IMR-90 (cell line): ENCODE measurements at regions of chr1 and their contacts with region 1.

Region 1: GRCh38 chr1:94926915-94927404 is at the start of gene CNN3:
- DNase-seq: peak; percentile 92
- ATAC-seq: peak; percentile 91
- H3K4me3 ChIP-seq: peak within 1 kb of the TSS; percentile 63
- H3K27ac ChIP-seq: peak within 1 kb of the TSS; percentile 93
- H3K4me1 ChIP-seq: peaks cover 23% of the 10 kb centered on the region
- H3K27me3 ChIP-seq: no peaks in the 10 kb centered on the region
- CTCF ChIP-seq: peak; percentile 9; the same call in 1 of the 2 replicates
- POLR2A ChIP-seq: peak; percentile 97
- RAD21 ChIP-seq: peak; percentile 17; the same call in 1 of the 2 replicates
- total RNA-seq, gene CNN3: 552 and 592 TPM in 2 replicates

Region 2: DNA sequence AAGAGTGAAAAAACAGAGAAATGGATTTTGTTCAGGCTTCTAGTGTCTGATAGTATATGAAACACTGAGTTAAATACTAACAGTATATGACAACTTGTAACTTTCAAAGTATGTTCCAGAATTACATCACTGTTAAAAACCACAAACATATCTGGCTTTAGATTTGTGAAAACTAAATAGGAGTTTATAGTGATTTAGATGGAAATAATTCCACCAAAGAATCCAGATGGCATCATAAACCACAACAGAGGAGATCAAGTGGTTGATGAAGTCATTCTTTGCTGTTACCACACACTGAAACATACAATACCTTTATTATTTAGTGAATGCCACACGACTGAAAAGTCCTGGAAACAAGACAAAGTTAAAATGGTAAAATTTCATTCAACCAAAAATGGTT is 108.6 kb after region 1 on chr1:
- CTCF ChIA-PET with region 1: no interaction called
- POLR2A ChIA-PET with region 1: no interaction called
- dilution Hi-C with region 1: no loop called
- in situ Hi-C with region 1: loop called (anchors 5 kb)
- intact Hi-C with region 1: no loop called
- DNase-seq: peak; percentile 97
- ATAC-seq: peak; percentile 67
- H3K4me3 ChIP-seq: no peak overlapping the region
- H3K27ac ChIP-seq: no peak overlapping the region
- H3K4me1 ChIP-seq: peaks cover 18% of the 10 kb centered on the region
- H3K27me3 ChIP-seq: no peaks in the 10 kb centered on the region
- CTCF ChIP-seq: no peak
- POLR2A ChIP-seq: no peak
- RAD21 ChIP-seq: no peak